Activated CD4-positive, alpha-beta T cell treated with anti-CD3 and anti-CD28 coated beads, Interleukin-2, amount 10 ng/mL, durations not matched to agents 7 days and 5 days (primary cell): ENCODE measurements at regions of chr6 and their contacts with region 1.

Region 1: DNA sequence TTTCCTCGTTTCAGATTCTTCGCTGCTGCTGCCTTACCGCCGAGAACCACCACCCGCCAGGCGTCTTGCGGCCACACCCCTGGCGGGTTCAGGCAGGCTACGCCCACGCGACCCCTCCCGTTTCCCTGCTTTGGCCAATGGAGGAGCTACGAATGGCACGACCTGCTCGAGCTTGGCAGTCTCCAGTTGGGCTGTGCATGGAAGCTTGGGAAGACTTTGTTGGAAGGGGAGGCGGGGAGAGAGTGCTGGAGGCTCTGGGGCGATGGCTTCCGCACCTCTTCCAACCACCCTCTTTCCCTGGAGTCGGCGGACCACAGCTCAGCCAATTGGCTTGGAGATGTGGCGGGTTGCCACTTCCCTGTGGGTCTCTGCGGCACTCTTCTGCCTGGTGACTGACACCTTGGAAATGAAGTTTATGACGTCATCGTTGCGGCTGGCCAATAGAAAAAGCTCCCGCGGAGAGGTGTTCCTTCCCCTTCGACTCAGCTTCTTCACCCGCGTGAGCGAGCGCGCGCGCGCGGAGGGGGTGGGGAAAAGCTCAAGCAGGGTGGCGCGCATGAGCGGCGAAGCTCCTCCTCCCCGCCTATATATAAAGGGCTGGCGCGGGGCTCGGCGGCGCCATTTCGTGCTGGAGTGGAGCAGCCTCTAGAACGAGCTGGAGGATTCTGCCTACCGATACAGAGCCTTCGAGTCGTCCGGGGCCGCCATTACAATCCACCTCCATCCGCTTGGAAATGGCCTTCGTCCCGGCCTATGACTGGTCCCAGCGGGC is 3.4 kb downstream of the BRD2 start:
- DNase-seq: peak; percentile 100
- H3K4me3 Mint-ChIP-seq: peak overlapping the region; percentile 89
- H3K27ac Mint-ChIP-seq: peak overlapping the region; percentile 99
- H3K4me1 Mint-ChIP-seq: peaks cover 25% of the 10 kb centered on the region
- H3K27me3 Mint-ChIP-seq: no peaks in the 10 kb centered on the region

Region 2: GRCh38 chr6:32843979-32844838 is 127.6 kb before region 1 on chr6 and contains the start of gene PSMB8:
- CTCF ChIA-PET with region 1: interaction called, 59 read pairs
- POLR2A ChIA-PET with region 1: interaction called, 33 read pairs
- DNase-seq: peak; percentile 99
- H3K4me3 Mint-ChIP-seq: peak within 1 kb of the TSS; percentile 99
- H3K27ac Mint-ChIP-seq: peak within 1 kb of the TSS; percentile 100
- H3K4me1 Mint-ChIP-seq: peaks cover 75% of the 10 kb centered on the region
- H3K27me3 Mint-ChIP-seq: no peaks in the 10 kb centered on the region
- total RNA-seq, gene PSMB8: 307 to 379 TPM

Region 3: DNA sequence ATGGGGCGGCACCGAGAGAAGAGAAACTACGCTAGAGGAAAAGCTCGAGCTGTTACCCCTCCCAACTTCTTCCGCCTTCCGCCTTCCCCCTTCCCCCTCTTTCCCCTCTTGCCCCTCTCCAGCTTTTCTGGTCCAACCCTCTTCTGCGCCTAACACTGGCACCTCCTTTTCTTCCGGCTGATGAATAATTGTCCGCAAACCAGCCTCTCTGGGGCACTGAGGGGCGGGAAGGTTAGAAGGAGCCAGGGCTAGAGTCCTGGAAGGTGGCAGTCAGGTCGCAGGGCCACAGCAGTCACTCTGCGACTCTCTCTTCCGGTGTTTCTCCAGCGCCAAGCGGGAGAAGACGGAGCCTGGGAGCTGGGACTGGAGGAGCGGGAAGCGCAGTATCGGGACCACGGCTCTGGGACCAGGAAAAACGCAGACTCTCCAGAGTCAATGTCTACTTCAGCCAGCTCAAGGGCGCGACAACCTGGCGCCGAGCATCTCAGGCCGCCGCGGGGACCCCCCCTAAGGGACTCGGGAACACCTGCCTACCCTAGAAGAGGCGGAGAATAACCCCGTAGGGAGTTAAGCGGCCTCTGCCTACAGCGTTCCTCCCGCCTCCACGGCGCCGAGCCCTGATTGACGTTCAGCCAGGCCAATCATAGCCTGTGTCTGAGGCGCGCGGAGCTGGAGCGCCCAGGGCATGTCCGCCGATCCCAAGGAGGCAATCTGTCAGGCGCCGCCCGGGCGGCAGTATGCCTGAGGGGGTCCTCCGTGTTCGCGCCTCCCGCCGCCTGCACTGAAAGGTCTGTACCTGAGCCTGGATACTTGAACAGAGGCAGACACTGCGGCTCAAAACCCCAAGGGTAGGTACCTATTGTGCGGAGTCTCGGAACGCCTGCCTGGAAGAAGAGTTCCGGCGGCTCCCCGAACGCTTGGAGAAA is 77.4 kb before region 1 on chr6:
- CTCF ChIA-PET with region 1: interaction called, 5 read pairs
- POLR2A ChIA-PET with region 1: interaction called, 11 read pairs
- DNase-seq: peak; percentile 93
- H3K4me3 Mint-ChIP-seq: peak overlapping the region; percentile 100
- H3K27ac Mint-ChIP-seq: peak overlapping the region; percentile 96
- H3K4me1 Mint-ChIP-seq: peaks cover 38% of the 10 kb centered on the region
- H3K27me3 Mint-ChIP-seq: peaks cover 15% of the 10 kb centered on the region

Region 4: DNA sequence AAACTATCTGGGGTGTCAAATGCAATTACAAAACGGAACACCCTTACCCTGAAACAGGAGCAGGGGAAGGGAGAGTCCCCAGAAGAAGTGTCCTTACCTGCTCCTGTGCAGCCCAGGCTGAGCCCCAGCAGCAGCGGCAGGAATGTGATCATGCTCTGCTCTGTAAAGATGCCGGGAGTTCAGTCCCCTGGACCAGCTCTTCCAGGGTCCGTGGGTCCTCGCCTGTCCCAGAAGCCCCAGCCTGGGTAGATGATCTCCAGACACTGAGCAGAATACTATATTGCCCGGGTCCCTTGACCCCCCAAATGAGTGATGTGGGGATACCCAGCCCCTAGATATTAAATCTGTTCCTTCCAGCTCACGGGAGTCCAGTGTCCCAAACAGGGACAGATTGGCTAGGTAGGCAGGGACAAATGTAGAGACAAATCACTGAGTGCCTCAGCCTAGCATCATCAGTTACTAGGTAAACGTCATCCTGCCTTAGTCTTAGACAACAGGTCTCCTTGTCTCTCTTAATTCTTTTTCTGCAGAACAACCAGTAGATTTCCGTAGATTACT is 31.0 kb before region 1 on chr6 and contains the start of gene HLA-DMB:
- CTCF ChIA-PET with region 1: interaction called, 12 read pairs
- POLR2A ChIA-PET with region 1: interaction called, 16 read pairs
- DNase-seq: peak; percentile 72
- H3K4me3 Mint-ChIP-seq: peak within 1 kb of the TSS; percentile 77
- H3K27ac Mint-ChIP-seq: peak within 1 kb of the TSS; percentile 97
- H3K4me1 Mint-ChIP-seq: peaks cover 64% of the 10 kb centered on the region
- H3K27me3 Mint-ChIP-seq: no peaks in the 10 kb centered on the region
- total RNA-seq, gene HLA-DMB: 8.1 to 8.5 TPM

Region 5: GRCh38 chr6:33000055-33000454 is 28.3 kb after region 1 on chr6:
- CTCF ChIA-PET with region 1: no interaction called
- POLR2A ChIA-PET with region 1: no interaction called
- DNase-seq: peak; percentile 49
- H3K4me3 Mint-ChIP-seq: no peak overlapping the region
- H3K27ac Mint-ChIP-seq: no peak overlapping the region
- H3K4me1 Mint-ChIP-seq: peaks cover 11% of the 10 kb centered on the region
- H3K27me3 Mint-ChIP-seq: peaks cover 47% of the 10 kb centered on the region

Region 6: DNA sequence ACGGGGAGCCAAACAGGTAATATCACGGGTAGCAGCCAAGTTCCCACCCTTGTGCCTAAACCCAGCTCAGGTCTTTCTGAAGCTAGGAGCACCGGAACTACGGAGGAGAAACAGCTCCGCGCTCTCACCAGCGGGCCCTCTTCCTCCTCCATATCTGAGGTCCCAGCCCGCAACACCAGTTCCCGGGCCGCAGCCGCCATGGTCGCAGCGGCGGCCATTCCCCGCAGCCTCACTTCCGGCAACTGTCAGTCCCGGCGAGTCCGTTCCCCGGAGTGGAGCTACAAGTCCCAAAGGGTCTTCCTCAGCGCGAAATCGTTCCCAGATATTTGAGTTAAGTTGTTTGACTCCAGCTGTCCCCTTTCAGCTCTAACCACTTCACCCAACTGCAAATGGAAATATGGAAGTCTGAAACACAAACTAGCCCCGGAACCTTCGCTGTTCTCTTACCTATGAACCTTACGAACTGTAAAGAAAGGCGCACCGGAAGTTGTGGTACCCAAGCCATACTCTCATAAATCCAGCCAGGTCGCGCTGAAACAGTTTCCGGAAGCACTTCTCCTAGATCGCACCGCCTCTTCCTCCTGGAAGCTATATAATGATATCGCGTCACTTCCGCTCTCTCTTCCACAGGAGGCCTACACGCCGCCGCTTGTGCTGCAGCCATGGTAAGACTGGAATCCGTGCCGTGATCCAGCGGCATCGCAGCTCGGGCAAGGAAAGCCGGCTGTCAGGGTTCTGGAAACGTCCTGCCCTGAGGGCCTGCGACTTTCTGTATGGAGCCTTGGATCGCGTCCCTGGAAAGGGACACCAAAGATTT is 299.9 kb after region 1 on chr6 and contains the starts of genes RPS18 and VPS52:
- CTCF ChIA-PET with region 1: no interaction called
- POLR2A ChIA-PET with region 1: interaction called, 11 read pairs
- DNase-seq: peak; percentile 96
- H3K4me3 Mint-ChIP-seq: peak within 1 kb of the TSS; percentile 95
- H3K27ac Mint-ChIP-seq: peak within 1 kb of the TSS; percentile 98
- H3K4me1 Mint-ChIP-seq: peaks cover 61% of the 10 kb centered on the region
- H3K27me3 Mint-ChIP-seq: no peaks in the 10 kb centered on the region
- total RNA-seq, gene RPS18: 2,438 to 3,135 TPM
- total RNA-seq, gene VPS52: 79.1 to 84.0 TPM